AG04450 (cell line): ENCODE measurements at regions of chr4 and their contacts with region 1.

Region 1: GRCh38 chr4:173609158-173609557 is 79.1 kb upstream of the HAND2 start:
- DNase-seq: no peak
- H3K4me3 ChIP-seq: no peak overlapping the region
- H3K27ac ChIP-seq: no peak overlapping the region
- H3K27me3 ChIP-seq: no peaks in the 10 kb centered on the region
- CTCF ChIP-seq: no peak

Region 2: GRCh38 chr4:173722075-173722474 is 112.9 kb after region 1 on chr4:
- CTCF ChIA-PET with region 1: no interaction called
- POLR2A ChIA-PET with region 1: interaction called, 12 read pairs
- DNase-seq: no peak
- H3K4me3 ChIP-seq: no peak overlapping the region
- H3K27ac ChIP-seq: no peak overlapping the region
- H3K27me3 ChIP-seq: no peaks in the 10 kb centered on the region
- CTCF ChIP-seq: no peak